ENCODE measurements at regions of chr17 and their contacts with region 1.

Region 1: GRCh38 chr17:39153599-39154051 is 2.2 kb upstream of the PLXDC1 start:
- DNase-seq: peak; percentile 87 to 96 (median 91)
- ATAC-seq: peak; percentile 74
- H3K4me3 ChIP-seq: peak overlapping the region; percentile 91
- H3K4me3 Mint-ChIP-seq: peak overlapping the region; percentile 93 to 100 (median 98)
- H3K27ac ChIP-seq: peak overlapping the region; percentile 61
- H3K27ac Mint-ChIP-seq: peak overlapping the region; percentile 92 to 100 (median 98)
- H3K4me1 ChIP-seq: peaks cover 10 to 26% of the 10 kb centered on the region in 2 donors
- H3K4me1 Mint-ChIP-seq: peaks cover 29 to 51% (median 38%) of the 10 kb centered on the region in 7 donors
- H3K27me3 ChIP-seq: no peaks in the 10 kb centered on the region
- H3K27me3 Mint-ChIP-seq: peaks cover 0 to 54% (median 4%) of the 10 kb centered on the region in 5 donors

Region 2: GRCh38 chr17:38824899-38825761 is 328.5 kb before region 1 on chr17 and contains the start of gene CWC25:
- CTCF ChIA-PET with region 1: no interaction called
- POLR2A ChIA-PET with region 1: no interaction called
- intact Hi-C with region 1: loop called in 1 of 2 experiments (anchors 5 kb)
- DNase-seq: peak; percentile 91 to 100 (median 97)
- ATAC-seq: peak; percentile 92
- H3K4me3 ChIP-seq: peak within 1 kb of the TSS; percentile 77
- H3K4me3 Mint-ChIP-seq: peak within 1 kb of the TSS; percentile 92 to 100 (median 99)
- H3K27ac ChIP-seq: peak within 1 kb of the TSS; percentile 92
- H3K27ac Mint-ChIP-seq: peak within 1 kb of the TSS; percentile 97 to 100 (median 100)
- H3K4me1 ChIP-seq: peaks cover 18 to 21% of the 10 kb centered on the region in 2 donors
- H3K4me1 Mint-ChIP-seq: peaks cover 13 to 42% (median 34%) of the 10 kb centered on the region in 7 donors
- H3K27me3 ChIP-seq: no peaks in the 10 kb centered on the region
- H3K27me3 Mint-ChIP-seq: peaks cover 0 to 5% (median 0%) of the 10 kb centered on the region in 5 donors
- total RNA-seq, gene CWC25: 33.0 to 69.5 (median 53.4) TPM

Region 3: DNA sequence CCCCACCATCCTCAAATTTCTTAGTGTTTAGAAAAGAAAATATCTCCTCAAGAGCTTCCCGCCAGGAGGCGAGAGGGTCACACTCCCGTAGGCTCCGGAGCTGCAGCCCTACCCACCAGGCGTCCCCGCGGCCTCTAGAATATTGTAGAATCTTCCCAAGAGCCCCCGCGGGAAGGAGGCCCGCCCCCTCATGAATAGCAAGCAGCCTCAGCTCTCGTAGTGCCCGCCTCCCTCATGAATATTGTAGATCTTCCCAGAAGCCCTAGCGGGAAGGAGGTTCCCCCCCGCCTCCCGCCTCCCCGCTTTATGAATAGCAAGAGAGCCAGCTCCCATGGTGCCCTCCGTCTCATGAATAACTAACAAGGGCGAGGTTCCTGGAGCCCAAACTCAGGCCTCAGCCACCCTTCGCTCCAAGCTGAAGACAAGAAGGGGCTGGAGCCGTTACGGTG is 186.3 kb before region 1 on chr17 and contains the start of gene FBXO47:
- CTCF ChIA-PET with region 1: interaction called, 4 read pairs
- POLR2A ChIA-PET with region 1: interaction called, 5 read pairs
- intact Hi-C with region 1: loop called in 1 of 2 experiments (anchors 5 kb)
- DNase-seq: peak; percentile 38 to 86 (median 77)
- ATAC-seq: peak; percentile 99
- H3K4me3 ChIP-seq: peak within 1 kb of the TSS; percentile 43
- H3K4me3 Mint-ChIP-seq: peak within 1 kb of the TSS; percentile 55 to 84 (median 81)
- H3K27ac ChIP-seq: peak within 1 kb of the TSS; percentile 59
- H3K27ac Mint-ChIP-seq: peak within 1 kb of the TSS; percentile 31 to 96 (median 69)
- H3K4me1 ChIP-seq: peaks cover 0 to 16% of the 10 kb centered on the region in 2 donors
- H3K4me1 Mint-ChIP-seq: peaks cover 11 to 28% (median 15%) of the 10 kb centered on the region in 7 donors
- H3K27me3 ChIP-seq: no peaks in the 10 kb centered on the region
- H3K27me3 Mint-ChIP-seq: peaks cover 0 to 2% (median 0%) of the 10 kb centered on the region in 5 donors
- total RNA-seq, gene FBXO47: not detected

Region 4: DNA sequence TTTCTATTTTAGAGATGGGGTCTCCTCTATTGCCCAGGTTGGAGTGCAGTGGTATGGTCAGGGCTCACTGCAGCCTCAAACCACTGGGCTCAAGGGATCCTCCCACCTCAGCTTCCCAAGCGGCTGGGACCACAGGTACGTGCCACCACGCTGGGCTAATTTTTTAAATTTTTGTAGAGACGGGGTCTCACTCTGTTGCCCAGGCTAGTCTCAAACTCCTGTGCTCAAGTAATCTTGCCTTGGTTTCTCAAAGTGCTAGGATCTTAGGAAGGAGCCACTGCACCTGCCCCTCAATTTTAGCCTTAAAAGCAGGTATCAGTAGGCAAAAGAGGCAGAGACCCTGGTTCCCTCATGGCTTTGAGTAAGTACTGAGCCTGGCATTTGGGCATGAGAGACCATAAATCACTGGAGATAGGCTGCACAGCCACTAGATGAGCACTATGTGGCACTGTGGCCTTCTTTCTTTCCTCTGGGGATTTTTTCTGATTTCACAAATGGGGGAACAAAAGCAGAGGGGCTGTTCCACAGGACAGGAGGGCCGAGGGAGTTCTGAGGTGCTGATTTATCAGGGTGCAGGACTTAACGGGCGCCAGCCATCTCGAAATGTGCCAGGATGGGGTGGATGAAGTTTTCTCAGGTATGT is 84.4 kb before region 1 on chr17:
- CTCF ChIA-PET with region 1: interaction called, 30 read pairs
- POLR2A ChIA-PET with region 1: interaction called, 11 read pairs
- intact Hi-C with region 1: loop called (anchors 1 kb)
- DNase-seq: peak in 7 of 9 donors; percentile 31 to 65 (median 49)
- ATAC-seq: peak; percentile 86
- H3K4me3 ChIP-seq: no peak overlapping the region
- H3K4me3 Mint-ChIP-seq: no peak overlapping the region
- H3K27ac ChIP-seq: no peak overlapping the region
- H3K27ac Mint-ChIP-seq: peak overlapping the region in 6 of 9 donors; percentile 10 to 88 (median 54)
- H3K4me1 ChIP-seq: no peaks in the 10 kb centered on the region
- H3K4me1 Mint-ChIP-seq: peaks cover 5 to 18% (median 7%) of the 10 kb centered on the region in 7 donors
- H3K27me3 ChIP-seq: no peaks in the 10 kb centered on the region
- H3K27me3 Mint-ChIP-seq: no peaks in the 10 kb centered on the region

Region 5: GRCh38 chr17:39174907-39175694 is 21.5 kb after region 1 on chr17:
- CTCF ChIA-PET with region 1: interaction called, 30 read pairs
- POLR2A ChIA-PET with region 1: interaction called, 6 read pairs
- intact Hi-C with region 1: loop called in 1 of 2 experiments (anchors 1 kb)
- DNase-seq: peak; percentile 64 to 80 (median 74)
- ATAC-seq: peak; percentile 93
- H3K4me3 ChIP-seq: no peak overlapping the region
- H3K4me3 Mint-ChIP-seq: no peak overlapping the region
- H3K27ac ChIP-seq: no peak overlapping the region
- H3K27ac Mint-ChIP-seq: peak overlapping the region in 3 of 9 donors; percentile 24 to 78 (median 48)
- H3K4me1 ChIP-seq: peaks cover 0 to 8% of the 10 kb centered on the region in 2 donors
- H3K4me1 Mint-ChIP-seq: peaks cover 12 to 29% (median 20%) of the 10 kb centered on the region in 7 donors
- H3K27me3 ChIP-seq: no peaks in the 10 kb centered on the region
- H3K27me3 Mint-ChIP-seq: no peaks in the 10 kb centered on the region

Measured in naive thymus-derived CD4-positive, alpha-beta T cell (primary cell).